ENCODE measurements at regions of chr6 and their contacts with region 1.

Region 1: DNA sequence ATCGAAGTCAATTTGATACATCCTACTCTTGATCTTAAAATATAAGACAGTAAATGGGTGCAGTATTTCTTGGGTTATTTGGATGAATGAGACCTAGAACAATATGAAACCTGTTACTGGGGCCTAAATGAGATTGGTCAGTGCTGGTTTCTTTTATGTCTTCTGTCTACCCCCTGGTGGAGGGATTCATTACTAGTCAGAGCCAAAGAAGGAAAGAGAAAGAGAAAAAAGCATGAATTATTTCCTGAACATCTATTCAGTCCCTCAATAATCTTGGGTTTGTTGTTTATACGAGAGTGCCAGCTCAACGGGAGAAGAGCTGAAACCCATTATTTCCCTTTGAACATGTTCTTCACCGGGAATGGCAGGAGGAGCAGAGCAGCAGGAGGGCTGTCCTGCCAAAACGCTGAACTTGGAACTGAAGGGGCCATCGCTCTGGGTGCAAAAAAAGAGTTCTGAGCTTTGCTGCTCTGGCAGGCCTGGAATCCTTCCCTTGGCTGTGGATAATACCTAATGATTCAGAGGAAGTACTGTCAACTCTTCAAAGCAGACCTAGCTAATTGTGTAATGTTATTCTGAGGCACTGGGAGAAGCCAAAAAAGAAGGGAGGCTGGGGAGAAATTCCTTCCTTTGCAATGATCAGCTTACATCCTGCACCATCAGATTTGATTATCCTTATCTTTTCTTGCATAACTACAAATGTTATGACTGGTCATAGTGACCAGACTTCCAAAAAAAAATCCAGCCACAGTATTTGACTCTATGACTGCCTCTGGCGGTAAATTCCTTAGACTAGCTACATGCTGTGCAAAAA is 72.0 kb downstream of the BLOC1S5 start:
- DNase-seq: peak; percentile 9
- H3K4me3 Mint-ChIP-seq: no peak overlapping the region
- H3K27ac Mint-ChIP-seq: no peak overlapping the region
- H3K4me1 Mint-ChIP-seq: no peaks in the 10 kb centered on the region
- H3K27me3 Mint-ChIP-seq: no peaks in the 10 kb centered on the region
- CTCF ChIP-seq: peak; percentile 19

Region 2: DNA sequence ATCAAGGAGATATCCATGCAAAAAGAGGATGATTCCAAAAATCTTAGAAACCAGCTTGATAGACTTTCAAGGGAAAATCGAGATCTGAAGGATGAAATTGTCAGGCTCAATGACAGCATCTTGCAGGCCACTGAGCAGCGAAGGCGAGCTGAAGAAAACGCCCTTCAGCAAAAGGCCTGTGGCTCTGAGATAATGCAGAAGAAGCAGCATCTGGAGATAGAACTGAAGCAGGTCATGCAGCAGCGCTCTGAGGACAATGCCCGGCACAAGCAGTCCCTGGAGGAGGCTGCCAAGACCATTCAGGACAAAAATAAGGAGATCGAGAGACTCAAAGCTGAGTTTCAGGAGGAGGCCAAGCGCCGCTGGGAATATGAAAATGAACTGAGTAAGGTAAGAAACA is 412.4 kb before region 1 on chr6:
- CTCF ChIA-PET with region 1: no interaction called
- intact Hi-C with region 1: no loop called
- DNase-seq: no peak
- H3K4me3 Mint-ChIP-seq: no peak overlapping the region
- H3K27ac Mint-ChIP-seq: no peak overlapping the region
- H3K4me1 Mint-ChIP-seq: no peaks in the 10 kb centered on the region
- H3K27me3 Mint-ChIP-seq: no peaks in the 10 kb centered on the region
- CTCF ChIP-seq: no peak

Region 3: GRCh38 chr6:7615611-7616383 is 376.4 kb before region 1 on chr6:
- CTCF ChIA-PET with region 1: no interaction called
- intact Hi-C with region 1: loop called (anchors 10 kb)
- DNase-seq: peak; percentile 32
- H3K4me3 Mint-ChIP-seq: peak overlapping the region; percentile 54
- H3K27ac Mint-ChIP-seq: peak overlapping the region; percentile 80
- H3K4me1 Mint-ChIP-seq: peaks cover 27% of the 10 kb centered on the region
- H3K27me3 Mint-ChIP-seq: peaks cover 17% of the 10 kb centered on the region
- CTCF ChIP-seq: peak; percentile 34

Region 4: DNA sequence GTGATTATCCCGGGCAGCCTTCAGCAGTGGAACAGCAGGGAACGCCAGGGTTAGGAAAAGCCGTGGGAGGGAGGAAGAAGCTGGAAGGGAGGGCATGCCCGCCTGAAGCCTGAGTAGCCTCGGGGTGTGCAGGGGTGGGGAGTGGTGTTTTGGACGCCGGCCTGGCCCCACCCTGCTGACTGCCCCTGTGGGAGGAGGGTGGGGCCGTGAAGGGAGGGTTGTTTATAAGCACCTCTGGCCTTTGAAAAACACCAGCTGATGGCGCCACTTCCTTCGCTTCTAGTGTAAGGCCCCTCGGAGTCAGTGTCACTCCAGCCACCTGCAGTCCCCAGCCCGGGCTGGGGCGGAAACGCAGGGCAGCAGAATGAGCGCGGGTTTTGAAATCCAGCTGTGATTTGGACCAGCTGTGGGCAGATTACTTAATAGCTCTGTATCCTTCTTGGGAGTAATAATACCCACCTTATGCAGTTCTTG is 319.1 kb before region 1 on chr6:
- CTCF ChIA-PET with region 1: no interaction called
- intact Hi-C with region 1: no loop called
- DNase-seq: peak; percentile 31
- H3K4me3 Mint-ChIP-seq: peak overlapping the region; percentile 59
- H3K27ac Mint-ChIP-seq: no peak overlapping the region
- H3K4me1 Mint-ChIP-seq: peaks cover 11% of the 10 kb centered on the region
- H3K27me3 Mint-ChIP-seq: peaks cover 2% of the 10 kb centered on the region
- CTCF ChIP-seq: no peak

Region 5: GRCh38 chr6:7819431-7820015 is 172.7 kb before region 1 on chr6:
- CTCF ChIA-PET with region 1: no interaction called
- intact Hi-C with region 1: loop called (anchors 10 kb)
- DNase-seq: no peak
- H3K4me3 Mint-ChIP-seq: no peak overlapping the region
- H3K27ac Mint-ChIP-seq: no peak overlapping the region
- H3K4me1 Mint-ChIP-seq: no peaks in the 10 kb centered on the region
- H3K27me3 Mint-ChIP-seq: peaks cover 42% of the 10 kb centered on the region
- CTCF ChIP-seq: no peak

Region 6: GRCh38 chr6:7899101-7899888 is 92.9 kb before region 1 on chr6:
- CTCF ChIA-PET with region 1: no interaction called
- intact Hi-C with region 1: loop called (anchors 5 kb)
- DNase-seq: peak; percentile 3
- H3K4me3 Mint-ChIP-seq: no peak overlapping the region
- H3K27ac Mint-ChIP-seq: no peak overlapping the region
- H3K4me1 Mint-ChIP-seq: no peaks in the 10 kb centered on the region
- H3K27me3 Mint-ChIP-seq: no peaks in the 10 kb centered on the region
- CTCF ChIP-seq: no peak

Measured in Calu3 (cell line).